SK-N-SH (cell line): ENCODE measurements at regions of chr2 and their contacts with region 1.

Region 1: DNA sequence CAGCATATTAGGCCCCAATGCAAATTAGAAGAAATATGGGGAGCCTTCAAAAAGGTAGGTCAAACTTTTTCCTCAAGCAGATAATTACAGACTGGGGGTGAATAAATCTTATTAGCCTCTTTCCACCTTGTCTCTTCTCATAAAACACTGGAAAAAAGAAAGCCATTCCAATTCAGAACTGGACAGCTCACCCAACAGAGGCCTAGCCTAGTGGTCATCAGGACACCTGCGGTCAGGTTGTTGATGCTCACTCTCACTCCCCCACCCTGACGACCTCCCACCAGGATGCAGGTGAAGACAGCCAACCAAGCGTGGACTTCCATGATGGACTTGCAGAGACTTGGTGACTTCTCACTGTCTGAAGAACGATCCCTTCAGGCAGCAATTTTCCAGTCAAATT is 207.1 kb downstream of the ALK start:
- DNase-seq: no peak
- H3K4me3 ChIP-seq: no peak overlapping the region
- H3K27ac ChIP-seq: no peak overlapping the region
- H3K4me1 ChIP-seq: peaks cover 0 to 24% of the 10 kb centered on the region in 2 experiments; a peak in 2 of 4 replicates
- H3K27me3 ChIP-seq: peaks cover 5% of the 10 kb centered on the region; the same call in 1 of the 2 replicates
- CTCF ChIP-seq: no peak
- EP300 ChIP-seq: no peak
- RAD21 ChIP-seq: no peak

Region 2: GRCh38 chr2:29430382-29431112 is 283.8 kb before region 1 on chr2:
- CTCF ChIA-PET with region 1: no interaction called
- POLR2A ChIA-PET with region 1: no interaction called
- DNase-seq: peak; percentile 63
- H3K4me3 ChIP-seq: no peak overlapping the region
- H3K27ac ChIP-seq: peak overlapping the region in 1 of 2 experiments; percentile 99; a peak in 3 of 4 replicates
- H3K4me1 ChIP-seq: peaks cover 0 to 30% of the 10 kb centered on the region in 2 experiments; a peak in 2 of 4 replicates
- H3K27me3 ChIP-seq: no peaks in the 10 kb centered on the region
- CTCF ChIP-seq: no peak
- EP300 ChIP-seq: peak in 1 of 2 experiments; percentile 94; a peak in 2 of 4 replicates
- RAD21 ChIP-seq: peak; percentile 37; the same call in 1 of the 2 replicates

Region 3: DNA sequence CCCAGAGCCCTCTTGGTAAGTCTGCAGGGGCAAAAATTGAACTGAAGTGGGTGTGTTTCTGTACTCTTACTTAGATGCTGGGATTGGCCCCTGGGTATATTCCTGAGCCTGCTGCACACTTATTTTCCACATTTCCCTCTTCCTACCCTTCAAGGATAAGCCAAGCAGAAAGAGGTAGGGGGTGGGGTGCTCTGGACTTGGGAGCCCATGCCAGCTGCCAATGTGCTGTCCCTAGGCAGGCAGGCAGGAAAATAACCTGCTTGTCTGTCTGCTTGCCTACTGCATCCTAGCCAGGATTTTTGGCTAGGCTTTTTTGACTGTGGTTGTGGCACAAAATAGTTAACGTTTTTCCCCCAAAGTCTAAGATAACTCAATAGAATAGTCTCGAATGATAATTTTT is 27.2 kb before region 1 on chr2:
- CTCF ChIA-PET with region 1: no interaction called
- POLR2A ChIA-PET with region 1: no interaction called
- DNase-seq: no peak
- H3K4me3 ChIP-seq: no peak overlapping the region
- H3K27ac ChIP-seq: peak overlapping the region in 1 of 2 experiments; percentile 36; a peak in 1 of 4 replicates
- H3K4me1 ChIP-seq: peaks cover 0 to 29% of the 10 kb centered on the region in 2 experiments; a peak in 1 of 4 replicates
- H3K27me3 ChIP-seq: peaks cover 11% of the 10 kb centered on the region
- CTCF ChIP-seq: no peak
- EP300 ChIP-seq: no peak
- RAD21 ChIP-seq: no peak

Region 4: DNA sequence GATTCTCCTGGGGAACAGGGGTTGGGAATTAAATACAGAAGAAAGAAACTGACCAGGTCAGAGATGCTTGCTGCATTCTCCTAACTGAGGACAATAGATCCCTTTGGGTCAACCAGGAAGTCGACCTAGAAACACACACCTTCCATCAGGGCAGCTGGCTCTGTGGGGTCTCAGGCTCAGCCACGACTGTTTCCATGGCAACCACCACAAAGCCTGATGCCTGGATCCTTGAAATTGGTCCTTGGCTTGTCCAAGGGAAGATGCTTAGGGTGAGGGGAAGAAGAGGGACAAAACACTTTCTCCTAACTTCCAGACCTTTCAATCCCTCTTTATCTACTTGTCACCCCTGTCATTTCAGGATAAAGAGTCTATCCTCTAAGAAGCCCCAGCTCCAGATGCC is 12.6 kb after region 1 on chr2:
- CTCF ChIA-PET with region 1: interaction called, 10 read pairs
- POLR2A ChIA-PET with region 1: no interaction called
- DNase-seq: no peak
- H3K4me3 ChIP-seq: no peak overlapping the region
- H3K27ac ChIP-seq: no peak overlapping the region; a peak in 1 of 4 replicates
- H3K4me1 ChIP-seq: peaks cover 0 to 59% of the 10 kb centered on the region in 2 experiments; a peak in 2 of 4 replicates
- H3K27me3 ChIP-seq: peaks cover 1% of the 10 kb centered on the region; the same call in 1 of the 2 replicates
- CTCF ChIP-seq: no peak
- EP300 ChIP-seq: no peak
- RAD21 ChIP-seq: no peak